Activated T-helper 1 cell treated with anti-CD3 and anti-CD28 coated beads, Interleukin-12 subunit alpha, Interleukin-12 subunit beta, Interleukin-2, Interleukin-4 antibody, amounts not matched to agents 30 ng/mL and 10 ng/mL and 1 ng/mL, durations not matched to agents 14 hours and 24 hours and 36 hours (primary cell): ENCODE measurements at regions of chr6 and their contacts with region 1.

Region 1: GRCh38 chr6:75284632-75285286 is at the start of gene TMEM30A:
- DNase-seq: peak; percentile 97
- H3K4me3 Mint-ChIP-seq: no peak within 1 kb of the TSS
- H3K27ac Mint-ChIP-seq: no peak within 1 kb of the TSS
- H3K4me1 Mint-ChIP-seq: peaks cover 40% of the 10 kb centered on the region
- H3K27me3 Mint-ChIP-seq: no peaks in the 10 kb centered on the region
- total RNA-seq, gene TMEM30A: 66.6 and 67.2 TPM in 2 replicates

Region 2: GRCh38 chr6:75217193-75217592 is 67.6 kb before region 1 on chr6:
- intact Hi-C with region 1: loop called (anchors 1 kb)
- DNase-seq: no peak
- H3K4me3 Mint-ChIP-seq: peak overlapping the region; percentile 31
- H3K27ac Mint-ChIP-seq: peak overlapping the region; percentile 32
- H3K4me1 Mint-ChIP-seq: peaks cover 18% of the 10 kb centered on the region
- H3K27me3 Mint-ChIP-seq: peaks cover 10% of the 10 kb centered on the region

Region 3: DNA sequence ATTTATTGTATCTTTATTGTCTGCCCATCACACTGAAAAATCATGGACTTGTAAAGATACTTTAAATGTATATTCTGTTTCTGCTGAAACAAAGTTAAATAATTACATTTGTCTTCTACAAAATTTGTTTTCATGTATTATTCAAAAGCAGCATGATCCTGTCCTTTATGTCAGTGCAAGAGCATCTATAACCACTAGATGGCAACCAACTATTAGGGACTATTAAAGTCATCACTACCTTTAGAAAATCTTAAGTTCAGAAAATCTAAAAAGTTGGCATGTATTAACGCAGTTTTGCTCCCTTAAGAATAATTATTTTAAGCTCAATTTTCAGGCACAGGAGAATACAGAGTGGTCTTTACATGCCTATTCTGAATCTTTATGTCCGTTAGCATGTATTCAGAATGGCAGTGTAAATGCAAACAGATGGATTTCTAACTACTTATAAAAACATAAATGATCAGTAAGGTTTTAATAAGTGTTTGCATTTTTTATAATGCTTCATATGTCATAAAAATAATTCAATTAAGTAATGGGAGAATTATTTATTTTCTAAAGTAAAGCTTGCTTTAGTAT is 18.0 kb before region 1 on chr6:
- intact Hi-C with region 1: loop called (anchors 1 kb)
- DNase-seq: no peak
- H3K4me3 Mint-ChIP-seq: no peak overlapping the region
- H3K27ac Mint-ChIP-seq: no peak overlapping the region
- H3K4me1 Mint-ChIP-seq: peaks cover 41% of the 10 kb centered on the region
- H3K27me3 Mint-ChIP-seq: no peaks in the 10 kb centered on the region

Region 4: DNA sequence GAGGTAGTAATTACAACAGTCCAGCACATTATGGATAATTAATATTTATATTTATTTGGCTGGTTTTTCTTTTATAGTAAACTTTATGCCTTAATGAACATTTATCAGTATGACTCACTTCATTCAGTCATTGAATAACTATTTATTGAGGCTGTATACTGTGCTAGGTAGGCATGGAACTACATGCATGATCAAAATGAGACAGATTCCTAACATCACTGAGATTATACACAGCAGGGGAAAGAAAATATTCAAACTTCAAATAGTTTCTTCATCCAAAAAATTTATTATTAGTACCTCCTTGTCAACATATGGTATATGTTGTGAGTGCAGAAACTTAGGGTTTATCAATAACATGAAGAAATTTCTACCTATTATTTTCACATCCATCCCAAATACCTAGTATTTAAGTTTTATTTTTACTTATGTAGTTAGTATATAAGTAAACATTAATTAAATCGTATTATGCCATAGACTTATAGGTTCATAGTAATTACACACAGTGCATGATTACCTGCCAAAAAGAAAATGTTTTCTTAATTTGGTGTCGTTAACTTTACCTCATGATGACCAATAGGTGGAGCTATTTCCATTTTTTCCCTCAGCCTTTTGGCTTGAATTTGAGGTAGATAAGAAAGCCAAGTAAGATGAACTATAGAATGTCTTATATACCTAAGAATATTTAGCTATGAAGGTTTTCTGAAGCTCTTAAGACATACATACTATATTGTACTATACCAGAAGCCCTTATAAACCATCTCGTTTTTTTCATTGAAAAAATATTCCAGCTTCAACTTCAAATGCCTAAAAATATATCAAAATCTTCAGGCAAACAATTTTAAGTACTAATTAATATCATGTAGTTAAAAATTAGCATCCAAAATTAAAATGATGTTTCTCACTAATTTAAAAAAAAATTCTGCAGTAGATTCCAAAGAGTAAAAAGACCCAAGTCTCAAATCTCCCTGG is 12.3 kb after region 1 on chr6:
- intact Hi-C with region 1: loop called (anchors 1 kb)
- DNase-seq: no peak
- H3K4me3 Mint-ChIP-seq: no peak overlapping the region
- H3K27ac Mint-ChIP-seq: no peak overlapping the region
- H3K4me1 Mint-ChIP-seq: no peaks in the 10 kb centered on the region
- H3K27me3 Mint-ChIP-seq: no peaks in the 10 kb centered on the region

Region 5: DNA sequence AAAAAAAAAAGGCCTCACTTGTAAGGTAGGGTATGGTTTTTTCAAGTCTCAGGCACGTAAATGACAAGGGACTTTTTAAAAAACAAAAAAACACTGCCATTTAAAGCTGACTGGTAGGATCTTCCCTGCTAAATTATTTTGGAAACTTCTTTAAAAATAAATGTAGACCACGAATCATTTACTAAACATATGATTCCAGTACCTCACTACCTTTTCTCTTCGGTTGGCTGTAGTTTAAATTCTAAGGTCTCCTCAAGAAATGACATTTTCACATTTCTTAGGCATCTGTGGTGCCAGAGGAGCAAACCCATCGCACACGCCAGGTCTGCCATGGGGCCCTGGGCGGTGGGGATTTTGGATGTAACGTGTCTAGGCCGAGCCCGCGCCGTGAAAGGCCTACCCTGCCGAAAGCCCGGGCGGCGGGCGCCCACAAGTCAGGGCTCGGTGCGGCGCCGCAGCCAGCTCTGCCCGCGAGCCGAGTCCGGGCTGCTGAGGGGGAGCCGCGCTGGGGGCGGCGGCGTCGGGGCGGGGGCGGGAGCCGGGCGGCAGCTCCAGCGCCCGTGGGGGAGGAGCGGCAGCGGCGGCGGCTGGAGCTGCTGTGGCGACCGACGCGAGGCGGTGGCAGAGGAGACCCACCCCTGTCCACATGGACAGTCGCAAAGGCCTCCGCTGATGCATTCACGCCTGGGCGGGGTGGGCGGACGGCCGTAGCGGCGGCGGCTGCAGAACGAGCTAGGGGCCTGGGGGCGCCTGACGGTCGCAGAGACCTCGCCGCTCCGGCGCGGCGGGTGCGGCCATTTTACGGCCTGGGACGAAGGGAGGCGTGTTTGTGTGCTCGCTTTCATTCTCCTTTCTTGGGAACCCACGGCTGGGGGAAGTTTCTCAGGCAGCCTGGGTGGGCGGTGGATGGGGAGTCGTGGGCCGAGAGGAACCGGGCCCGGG is 316.8 kb after region 1 on chr6 and contains the start of gene SENP6:
- intact Hi-C with region 1: loop called (anchors 1 kb)
- DNase-seq: peak; percentile 68
- H3K4me3 Mint-ChIP-seq: peak within 1 kb of the TSS; percentile 100
- H3K27ac Mint-ChIP-seq: peak within 1 kb of the TSS; percentile 99
- H3K4me1 Mint-ChIP-seq: peaks cover 49% of the 10 kb centered on the region
- H3K27me3 Mint-ChIP-seq: no peaks in the 10 kb centered on the region
- total RNA-seq, gene SENP6: 81.2 and 81.7 TPM in 2 replicates

Region 6: GRCh38 chr6:75946146-75946831 is 661.5 kb after region 1 on chr6:
- intact Hi-C with region 1: no loop called
- DNase-seq: no peak
- H3K4me3 Mint-ChIP-seq: no peak overlapping the region
- H3K27ac Mint-ChIP-seq: no peak overlapping the region
- H3K4me1 Mint-ChIP-seq: no peaks in the 10 kb centered on the region
- H3K27me3 Mint-ChIP-seq: peaks cover 2% of the 10 kb centered on the region